ENCODE measurements at regions of chr14 and their contacts with region 1.

Region 1: DNA sequence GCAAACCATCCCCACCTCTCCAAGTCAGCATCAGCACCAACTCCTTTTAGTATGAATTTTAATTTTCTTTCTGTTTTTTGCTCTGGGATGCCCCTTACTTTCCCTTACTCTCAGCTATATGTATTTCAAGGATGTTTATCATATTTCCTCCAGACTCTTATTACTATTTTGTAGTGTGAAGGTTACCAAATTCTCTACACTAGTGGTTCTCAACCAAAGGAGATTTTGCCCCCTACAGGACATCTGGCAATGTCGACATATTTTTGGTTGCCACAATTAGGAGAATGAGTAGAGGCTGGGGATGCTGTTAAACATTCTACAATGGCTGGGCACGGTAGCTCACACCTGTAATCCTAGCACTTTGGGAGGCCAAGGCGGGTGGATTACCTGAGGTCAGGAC is 29.1 kb upstream of the SOS2 start:
- DNase-seq: peak; percentile 10 to 40 (median 16)
- H3K4me3 ChIP-seq: no peak overlapping the region
- H3K4me3 Mint-ChIP-seq: no peak overlapping the region
- H3K27ac ChIP-seq: no peak overlapping the region
- H3K27ac Mint-ChIP-seq: peak overlapping the region in 1 of 7 donors; percentile 27
- H3K4me1 ChIP-seq: no peaks in the 10 kb centered on the region
- H3K4me1 Mint-ChIP-seq: no peaks in the 10 kb centered on the region
- H3K27me3 ChIP-seq: no peaks in the 10 kb centered on the region
- H3K27me3 Mint-ChIP-seq: no peaks in the 10 kb centered on the region
- CTCF ChIP-seq: peak; percentile 54

Region 2: DNA sequence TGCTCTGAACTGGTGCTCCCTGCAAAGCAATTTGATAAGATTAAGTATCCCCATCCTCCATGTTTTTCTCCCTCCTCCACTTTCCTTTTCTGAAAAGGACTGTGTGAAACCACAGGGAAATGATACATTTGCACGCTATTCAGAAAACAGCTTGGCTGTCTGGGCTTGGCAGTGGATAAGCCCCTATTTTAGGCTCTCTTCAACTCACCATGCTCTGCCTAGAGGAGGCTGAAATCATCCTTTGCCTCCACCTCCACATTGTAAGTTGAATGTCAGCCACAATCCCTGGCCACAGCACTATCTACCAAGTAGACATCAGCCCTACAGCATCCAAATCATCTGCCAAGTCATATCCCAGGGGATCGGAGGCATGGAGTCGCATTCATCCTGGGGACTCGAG is 1316.6 kb before region 1 on chr14:
- intact Hi-C with region 1: loop called in 1 of 2 experiments (anchors 10 kb)
- DNase-seq: no peak
- H3K4me3 ChIP-seq: no peak overlapping the region
- H3K4me3 Mint-ChIP-seq: no peak overlapping the region
- H3K27ac ChIP-seq: no peak overlapping the region
- H3K27ac Mint-ChIP-seq: no peak overlapping the region
- H3K4me1 ChIP-seq: no peaks in the 10 kb centered on the region
- H3K4me1 Mint-ChIP-seq: no peaks in the 10 kb centered on the region
- H3K27me3 ChIP-seq: no peaks in the 10 kb centered on the region
- H3K27me3 Mint-ChIP-seq: peaks cover 0 to 2% (median 0%) of the 10 kb centered on the region in 3 donors
- CTCF ChIP-seq: no peak

Region 3: GRCh38 chr14:50383618-50384225 is 123.2 kb after region 1 on chr14:
- intact Hi-C with region 1: no loop called
- DNase-seq: no peak
- H3K4me3 ChIP-seq: no peak overlapping the region
- H3K4me3 Mint-ChIP-seq: no peak overlapping the region
- H3K27ac ChIP-seq: no peak overlapping the region
- H3K27ac Mint-ChIP-seq: no peak overlapping the region
- H3K4me1 ChIP-seq: no peaks in the 10 kb centered on the region
- H3K4me1 Mint-ChIP-seq: no peaks in the 10 kb centered on the region
- H3K27me3 ChIP-seq: no peaks in the 10 kb centered on the region
- H3K27me3 Mint-ChIP-seq: no peaks in the 10 kb centered on the region
- CTCF ChIP-seq: no peak